Calu3 (cell line): ENCODE measurements at regions of chr6 and their contacts with region 1.

Region 1: GRCh38 chr6:108560463-108561308 is at the start of gene FOXO3:
- DNase-seq: peak; percentile 94
- H3K4me3 Mint-ChIP-seq: peak within 1 kb of the TSS; percentile 94
- H3K27ac Mint-ChIP-seq: peak within 1 kb of the TSS; percentile 93
- H3K4me1 Mint-ChIP-seq: peaks cover 20% of the 10 kb centered on the region
- H3K27me3 Mint-ChIP-seq: no peaks in the 10 kb centered on the region
- CTCF ChIP-seq: no peak
- total RNA-seq, gene FOXO3: 44.1 and 45.5 TPM in 2 replicates

Region 2: DNA sequence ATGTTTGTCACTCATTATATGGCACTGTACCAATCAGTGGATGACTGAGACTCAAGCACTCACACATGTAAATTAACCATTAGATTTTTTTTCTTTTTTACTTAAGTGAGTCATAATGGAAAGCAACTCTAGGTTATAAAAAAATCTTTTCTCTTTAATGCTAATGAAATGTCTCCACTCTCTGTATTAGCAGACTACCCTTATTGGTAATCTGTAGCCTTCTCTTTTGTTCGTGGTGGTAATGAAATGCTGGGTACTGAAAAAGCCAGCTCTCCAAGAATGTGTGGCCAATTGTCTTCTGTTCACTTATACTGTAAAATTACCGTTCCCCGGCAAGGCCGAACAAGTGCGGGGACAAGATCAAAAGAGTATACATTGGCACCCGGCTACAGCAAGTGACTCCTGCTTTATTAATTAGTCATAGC is 196.8 kb before region 1 on chr6:
- CTCF ChIA-PET with region 1: no interaction called
- intact Hi-C with region 1: no loop called
- DNase-seq: no peak
- H3K4me3 Mint-ChIP-seq: no peak overlapping the region
- H3K27ac Mint-ChIP-seq: no peak overlapping the region
- H3K4me1 Mint-ChIP-seq: peaks cover 9% of the 10 kb centered on the region
- H3K27me3 Mint-ChIP-seq: no peaks in the 10 kb centered on the region
- CTCF ChIP-seq: no peak

Region 3: GRCh38 chr6:108673602-108674001 is 112.9 kb after region 1 on chr6:
- CTCF ChIA-PET with region 1: no interaction called
- intact Hi-C with region 1: loop called (anchors 5 kb)
- DNase-seq: peak; percentile 68
- H3K4me3 Mint-ChIP-seq: peak overlapping the region; percentile 54
- H3K27ac Mint-ChIP-seq: peak overlapping the region; percentile 96
- H3K4me1 Mint-ChIP-seq: peaks cover 56% of the 10 kb centered on the region
- H3K27me3 Mint-ChIP-seq: no peaks in the 10 kb centered on the region
- CTCF ChIP-seq: no peak

Region 4: GRCh38 chr6:108689247-108690161 is 128.8 kb after region 1 on chr6:
- CTCF ChIA-PET with region 1: interaction called, 7 read pairs
- intact Hi-C with region 1: loop called (anchors 2 kb)
- DNase-seq: peak; percentile 93
- H3K4me3 Mint-ChIP-seq: peak overlapping the region; percentile 49
- H3K27ac Mint-ChIP-seq: peak overlapping the region; percentile 92
- H3K4me1 Mint-ChIP-seq: peaks cover 66% of the 10 kb centered on the region
- H3K27me3 Mint-ChIP-seq: no peaks in the 10 kb centered on the region
- CTCF ChIP-seq: no peak

Region 5: GRCh38 chr6:108737594-108738546 is 177.2 kb after region 1 on chr6:
- CTCF ChIA-PET with region 1: interaction called, 4 read pairs
- intact Hi-C with region 1: loop called (anchors 5 kb)
- DNase-seq: peak; percentile 83
- H3K4me3 Mint-ChIP-seq: peak overlapping the region; percentile 56
- H3K27ac Mint-ChIP-seq: peak overlapping the region; percentile 99
- H3K4me1 Mint-ChIP-seq: peaks cover 81% of the 10 kb centered on the region
- H3K27me3 Mint-ChIP-seq: no peaks in the 10 kb centered on the region
- CTCF ChIP-seq: no peak

Region 6: GRCh38 chr6:108774555-108774954 is 213.9 kb after region 1 on chr6:
- CTCF ChIA-PET with region 1: no interaction called
- intact Hi-C with region 1: no loop called
- DNase-seq: no peak
- H3K4me3 Mint-ChIP-seq: no peak overlapping the region
- H3K27ac Mint-ChIP-seq: no peak overlapping the region
- H3K4me1 Mint-ChIP-seq: no peaks in the 10 kb centered on the region
- H3K27me3 Mint-ChIP-seq: no peaks in the 10 kb centered on the region
- CTCF ChIP-seq: no peak

Region 7: GRCh38 chr6:108835218-108835850 is 274.6 kb after region 1 on chr6:
- CTCF ChIA-PET with region 1: interaction called, 6 read pairs
- intact Hi-C with region 1: loop called (anchors 1 kb)
- DNase-seq: peak; percentile 87
- H3K4me3 Mint-ChIP-seq: no peak overlapping the region
- H3K27ac Mint-ChIP-seq: no peak overlapping the region
- H3K4me1 Mint-ChIP-seq: peaks cover 8% of the 10 kb centered on the region
- H3K27me3 Mint-ChIP-seq: no peaks in the 10 kb centered on the region
- CTCF ChIP-seq: peak; percentile 95